Heart right ventricle (tissue), 16 donors: ENCODE measurements at regions of chr18 and their contacts with region 1.

Region 1: GRCh38 chr18:73264562-73264921 is 396.8 kb upstream of the NETO1 start:
- DNase-seq: no peak
- ATAC-seq: no peak
- H3K4me3 ChIP-seq: no peak overlapping the region
- H3K27ac ChIP-seq: no peak overlapping the region
- H3K4me1 ChIP-seq: no peaks in the 10 kb centered on the region
- H3K27me3 ChIP-seq: no peaks in the 10 kb centered on the region
- CTCF ChIP-seq: no peak

Region 2: DNA sequence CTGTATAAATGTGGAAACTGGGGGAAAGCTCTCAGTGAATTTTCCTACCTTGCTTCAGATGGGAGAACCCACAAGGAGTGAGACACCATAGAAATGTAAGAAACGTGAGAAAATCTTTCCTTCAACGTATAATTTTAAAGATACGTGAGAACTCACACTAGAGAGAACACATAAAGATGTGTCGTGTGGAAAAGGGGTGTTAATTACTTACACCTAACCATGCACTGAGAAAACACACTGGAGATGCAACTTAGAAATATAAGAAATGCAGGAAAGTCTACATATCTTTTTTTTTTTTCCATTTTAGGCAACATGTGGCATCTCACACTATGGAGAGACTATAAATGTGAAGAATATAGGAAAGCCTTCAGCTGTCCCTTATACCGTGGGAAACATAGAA is 43.9 kb before region 1 on chr18:
- intact Hi-C with region 1: loop called in 1 of 10 experiments (anchors 1 kb)
- DNase-seq: no peak
- ATAC-seq: no peak
- H3K4me3 ChIP-seq: no peak overlapping the region
- H3K27ac ChIP-seq: no peak overlapping the region
- H3K4me1 ChIP-seq: no peaks in the 10 kb centered on the region
- H3K27me3 ChIP-seq: no peaks in the 10 kb centered on the region
- CTCF ChIP-seq: no peak

Region 3: GRCh38 chr18:73274812-73275621 is 10.5 kb after region 1 on chr18:
- intact Hi-C with region 1: loop called in 1 of 10 experiments (anchors 1 kb)
- DNase-seq: no peak
- ATAC-seq: no peak
- H3K4me3 ChIP-seq: no peak overlapping the region
- H3K27ac ChIP-seq: no peak overlapping the region
- H3K4me1 ChIP-seq: no peaks in the 10 kb centered on the region
- H3K27me3 ChIP-seq: no peaks in the 10 kb centered on the region
- CTCF ChIP-seq: no peak

Region 4: GRCh38 chr18:73331212-73331772 is 66.8 kb after region 1 on chr18:
- intact Hi-C with region 1: no loop called
- DNase-seq: no peak
- ATAC-seq: no peak
- H3K4me3 ChIP-seq: no peak overlapping the region
- H3K27ac ChIP-seq: no peak overlapping the region
- H3K4me1 ChIP-seq: no peaks in the 10 kb centered on the region
- H3K27me3 ChIP-seq: no peaks in the 10 kb centered on the region
- CTCF ChIP-seq: no peak